ENCODE measurements at regions of chr17 and their contacts with region 1.

Region 1: DNA sequence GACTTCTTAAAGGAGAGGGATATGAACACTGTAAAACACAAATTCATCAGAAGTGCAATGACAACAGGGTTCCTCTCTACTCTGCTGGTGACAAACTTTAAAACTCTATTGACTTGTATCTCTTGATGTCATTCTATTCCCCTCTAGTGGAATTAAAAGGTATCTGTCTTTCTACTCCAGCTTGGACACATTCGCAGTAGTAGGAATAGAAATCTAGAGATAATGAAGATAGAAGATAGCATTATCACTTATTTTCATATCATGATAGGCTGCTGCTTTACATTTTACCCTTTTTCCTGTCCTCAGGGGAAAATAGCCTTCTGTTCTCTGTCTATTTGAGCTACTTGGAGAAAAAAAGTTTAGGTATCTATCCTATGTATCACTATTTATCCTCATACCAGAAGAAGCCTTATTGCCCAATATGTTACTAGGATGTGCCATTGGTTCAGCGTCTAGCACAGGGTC is 209.6 kb upstream of the CACNG5 start:
- DNase-seq: peak; percentile 63
- H3K4me3 ChIP-seq: no peak overlapping the region
- H3K27ac ChIP-seq: peak overlapping the region in 1 of 2 experiments; percentile 1; a peak in 2 of 4 replicates
- H3K4me1 ChIP-seq: peaks cover under 1 to 31% of the 10 kb centered on the region in 2 experiments; a peak in 3 of 4 replicates
- H3K27me3 ChIP-seq: no peaks in the 10 kb centered on the region
- CTCF ChIP-seq: peak; percentile 78
- EP300 ChIP-seq: peak in 1 of 2 experiments; percentile 55; a peak in 1 of 4 replicates
- RAD21 ChIP-seq: peak; percentile 95

Region 2: GRCh38 chr17:66549731-66550207 is 75.6 kb before region 1 on chr17:
- CTCF ChIA-PET with region 1: no interaction called
- POLR2A ChIA-PET with region 1: no interaction called
- DNase-seq: no peak
- H3K4me3 ChIP-seq: no peak overlapping the region
- H3K27ac ChIP-seq: peak overlapping the region; percentile 56 to 81; a peak in 3 of 4 replicates
- H3K4me1 ChIP-seq: peaks cover 14 to 30% of the 10 kb centered on the region in 2 experiments; a peak in 3 of 4 replicates
- H3K27me3 ChIP-seq: no peaks in the 10 kb centered on the region
- CTCF ChIP-seq: no peak
- EP300 ChIP-seq: peak in 1 of 2 experiments; percentile 7; a peak in 2 of 4 replicates
- RAD21 ChIP-seq: 0 out of 2 replicates have a peak, but pooled peaks have one; percentile 1

Region 3: GRCh38 chr17:66612993-66613392 is 12.3 kb before region 1 on chr17:
- CTCF ChIA-PET with region 1: interaction called, 32 read pairs
- POLR2A ChIA-PET with region 1: no interaction called
- DNase-seq: peak; percentile 44
- H3K4me3 ChIP-seq: no peak overlapping the region
- H3K27ac ChIP-seq: peak overlapping the region in 1 of 2 experiments; percentile 18; a peak in 2 of 4 replicates
- H3K4me1 ChIP-seq: peaks cover 0 to 10% of the 10 kb centered on the region in 2 experiments; a peak in 2 of 4 replicates
- H3K27me3 ChIP-seq: no peaks in the 10 kb centered on the region
- CTCF ChIP-seq: no peak
- EP300 ChIP-seq: peak in 1 of 2 experiments; percentile 77; a peak in 2 of 4 replicates
- RAD21 ChIP-seq: no peak

Region 4: GRCh38 chr17:66661381-66661843 is 36.1 kb after region 1 on chr17:
- CTCF ChIA-PET with region 1: interaction called, 13 read pairs
- POLR2A ChIA-PET with region 1: no interaction called
- DNase-seq: no peak
- H3K4me3 ChIP-seq: no peak overlapping the region
- H3K27ac ChIP-seq: peak overlapping the region in 1 of 2 experiments; percentile 88; a peak in 2 of 4 replicates
- H3K4me1 ChIP-seq: peaks cover 9 to 37% of the 10 kb centered on the region in 2 experiments; a peak in 3 of 4 replicates
- H3K27me3 ChIP-seq: no peaks in the 10 kb centered on the region
- CTCF ChIP-seq: no peak
- EP300 ChIP-seq: peak in 1 of 2 experiments; percentile 16; a peak in 1 of 4 replicates
- RAD21 ChIP-seq: no peak